Cardiac septum (tissue), 1 donor: ENCODE measurements at regions of chr4 and their contacts with region 1.

Region 1: GRCh38 chr4:88211473-88212252 is 53.2 kb upstream of the ABCG2 start:
- DNase-seq: no peak

Region 2: GRCh38 chr4:87375719-87376291 is 835.9 kb before region 1 on chr4:
- intact Hi-C with region 1: no loop called
- DNase-seq: no peak

Region 3: GRCh38 chr4:87856816-87857215 is 354.8 kb before region 1 on chr4:
- intact Hi-C with region 1: loop called (anchors 5 kb)
- DNase-seq: no peak

Region 4: DNA sequence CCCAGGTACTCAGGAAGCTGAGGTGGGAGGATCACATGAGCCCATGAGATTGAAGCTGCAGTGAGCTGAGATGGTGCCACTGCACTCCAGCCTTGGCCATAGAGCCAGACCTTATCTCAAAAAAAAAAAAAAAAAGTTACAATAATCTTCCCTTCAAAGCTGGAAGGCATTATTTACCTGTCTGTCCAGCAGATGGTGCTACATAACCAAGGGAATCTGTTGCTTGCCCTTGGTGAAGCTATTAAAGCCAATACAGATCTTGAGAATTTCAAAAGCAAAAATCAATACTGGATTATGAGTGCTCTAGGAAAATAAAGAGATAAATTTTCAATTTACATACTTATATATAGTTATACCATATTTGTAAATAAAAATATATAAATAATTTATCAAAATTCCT is 178.4 kb before region 1 on chr4:
- intact Hi-C with region 1: loop called (anchors 1 kb)
- DNase-seq: no peak

Region 5: GRCh38 chr4:88054901-88055300 is 156.8 kb before region 1 on chr4:
- intact Hi-C with region 1: loop called (anchors 5 kb)
- DNase-seq: no peak